ENCODE measurements at regions of chr3 and their contacts with region 1.

Region 1: DNA sequence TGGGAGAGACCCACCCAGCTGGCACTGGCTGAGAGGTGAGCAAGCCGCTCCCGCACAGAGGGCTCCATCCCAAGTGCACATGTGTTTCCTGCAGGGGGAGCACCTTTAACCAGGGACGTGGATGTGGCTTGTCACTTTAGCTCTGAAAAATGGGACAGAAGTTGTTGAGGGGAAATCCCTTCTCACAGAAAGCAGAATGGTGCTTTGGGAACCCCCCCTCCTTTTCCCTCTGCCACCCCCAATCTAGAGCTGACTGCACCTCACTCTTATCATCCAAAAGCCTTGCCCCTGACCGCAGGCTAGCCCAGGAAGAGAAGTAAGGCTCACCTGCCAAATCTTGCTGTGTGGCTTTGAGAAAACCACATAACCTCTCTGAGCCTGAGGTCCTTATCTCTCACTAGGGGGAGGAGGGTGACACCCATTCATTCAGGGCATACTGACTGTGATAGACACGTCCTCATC is 77.9 kb downstream of the RPN1 start:
- DNase-seq: peak; percentile 54 to 82 (median 79)
- H3K4me3 ChIP-seq: peak overlapping the region in 1 of 7 experiments; percentile 12
- H3K27ac ChIP-seq: no peak overlapping the region
- H3K4me1 ChIP-seq: peaks cover 0 to 22% (median 20%) of the 10 kb centered on the region in 4 experiments
- H3K27me3 ChIP-seq: peaks cover 0 to 2% (median 0%) of the 10 kb centered on the region in 5 experiments

Region 2: DNA sequence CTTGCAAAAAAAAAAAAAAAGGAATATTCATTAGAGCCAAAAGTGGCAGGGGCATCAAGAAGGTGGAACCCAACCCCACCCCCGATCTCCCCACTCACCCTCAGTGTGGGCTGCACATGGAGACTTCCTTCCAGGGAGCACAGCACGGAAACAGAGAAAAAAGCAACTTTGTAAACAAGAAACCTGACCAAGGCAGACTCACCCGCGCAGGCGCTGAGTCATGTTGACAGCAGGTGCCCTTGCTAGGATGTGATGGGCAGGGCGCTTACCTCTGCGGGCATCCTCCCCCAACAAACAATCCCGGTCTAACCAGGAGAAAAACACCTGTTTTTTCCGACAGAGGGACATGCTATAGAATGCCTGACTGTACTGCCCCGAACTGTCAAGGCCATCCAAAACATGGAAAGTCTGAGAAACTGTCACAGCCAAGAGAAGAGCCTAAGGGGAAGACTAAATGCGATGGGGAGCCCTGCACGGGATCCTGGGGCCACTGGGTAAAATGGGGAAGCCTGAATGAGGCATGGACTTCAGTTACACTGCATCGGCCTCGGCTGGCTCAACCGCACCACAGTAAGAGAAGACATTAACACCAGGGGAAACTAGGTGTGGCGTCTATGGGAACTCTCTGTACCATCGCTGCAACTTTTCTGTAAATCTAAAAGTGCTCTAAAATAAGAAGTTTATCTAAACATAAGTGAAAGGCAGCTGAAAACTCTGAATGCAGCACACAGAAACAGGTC is 13.0 kb before region 1 on chr3:
- CTCF ChIA-PET with region 1: interaction called, 26 read pairs
- POLR2A ChIA-PET with region 1: interaction called, 4 read pairs
- DNase-seq: peak in 2 of 3 donors; percentile 66 to 71
- H3K4me3 ChIP-seq: peak overlapping the region in 1 of 7 experiments; percentile 23
- H3K27ac ChIP-seq: no peak overlapping the region
- H3K4me1 ChIP-seq: peaks cover 3 to 51% (median 47%) of the 10 kb centered on the region in 4 experiments
- H3K27me3 ChIP-seq: no peaks in the 10 kb centered on the region

Measured in common myeloid progenitor, CD34-positive (primary cell).